Right lobe of liver (tissue), 6 donors: ENCODE measurements at regions of chr5 and their contacts with region 1.

Region 1: GRCh38 chr5:174951146-174951780 is 226.9 kb downstream of the MSX2 start:
- DNase-seq: peak in 2 of 3 donors; percentile 42 to 72
- ATAC-seq: peak; percentile 95 to 96 (median 96)
- H3K4me3 ChIP-seq: no peak overlapping the region
- H3K27ac ChIP-seq: no peak overlapping the region
- H3K4me1 ChIP-seq: no peaks in the 10 kb centered on the region
- H3K27me3 ChIP-seq: no peaks in the 10 kb centered on the region
- CTCF ChIP-seq: peak; percentile 73 to 93 (median 88)
- POLR2A ChIP-seq: no peak

Region 2: DNA sequence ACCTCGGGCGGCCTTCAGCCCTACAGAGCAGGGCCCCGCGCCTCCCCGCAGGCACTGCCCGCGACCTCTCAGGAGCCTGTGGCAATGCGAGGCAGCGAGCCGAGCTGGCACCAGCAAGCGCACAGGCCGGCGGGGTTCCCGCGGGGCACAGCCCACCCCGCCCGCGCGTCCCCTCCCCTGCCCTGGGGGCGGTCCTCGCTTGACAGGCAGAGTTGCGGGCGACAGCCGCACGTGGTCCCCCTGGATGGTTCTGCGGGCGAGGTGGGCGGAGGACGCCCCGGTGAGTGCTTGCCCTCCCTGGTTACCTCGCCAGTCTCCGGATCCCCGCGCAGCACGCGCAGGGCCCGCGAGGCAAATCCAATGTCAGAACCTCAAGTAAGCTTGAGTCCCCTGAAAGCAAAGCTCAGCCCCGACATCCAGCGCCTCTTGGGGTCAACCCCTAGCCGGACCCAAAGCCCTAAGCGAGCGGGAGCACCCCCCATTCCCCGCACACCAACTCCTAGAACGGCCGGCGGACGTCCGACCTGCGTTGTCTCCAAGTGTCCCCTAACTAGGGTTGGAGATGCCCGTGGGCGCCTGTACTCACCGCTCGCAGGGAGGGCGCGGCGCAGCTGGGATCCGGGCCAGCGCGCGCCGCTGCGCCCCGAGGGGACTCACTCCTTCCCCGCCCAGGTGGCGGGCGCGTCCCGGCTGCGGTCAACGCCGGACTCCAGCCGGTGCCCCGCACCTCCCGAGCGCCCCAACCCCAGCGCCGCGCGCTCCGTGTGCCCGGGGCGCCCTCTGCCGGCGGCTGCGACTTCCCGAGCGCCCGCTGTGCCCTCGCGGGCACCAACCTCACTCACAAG is 493.0 kb after region 1 on chr5 and contains the start of gene DRD1:
- intact Hi-C with region 1: loop called in 1 of 2 experiments (anchors 10 kb)
- DNase-seq: peak; percentile 54 to 62 (median 60)
- ATAC-seq: peak; percentile 78 to 89 (median 86)
- H3K4me3 ChIP-seq: peak within 1 kb of the TSS; percentile 25 to 48 (median 41)
- H3K27ac ChIP-seq: no peak within 1 kb of the TSS
- H3K4me1 ChIP-seq: peaks cover 0 to 13% (median 4%) of the 10 kb centered on the region in 4 donors
- H3K27me3 ChIP-seq: no peaks in the 10 kb centered on the region
- CTCF ChIP-seq: peak; percentile 66 to 91 (median 82)
- POLR2A ChIP-seq: no peak
- total RNA-seq, gene DRD1: 0.06 to 0.18 (median 0.15) TPM in 3 of 6 experiments, not detected in the others